Activated CD8-positive, alpha-beta T cell treated with anti-CD3 and anti-CD28 coated beads, Interleukin-2, amount 10 ng/mL, durations not matched to agents 7 days and 5 days (primary cell): ENCODE measurements at regions of chr16 and their contacts with region 1.

Region 1: DNA sequence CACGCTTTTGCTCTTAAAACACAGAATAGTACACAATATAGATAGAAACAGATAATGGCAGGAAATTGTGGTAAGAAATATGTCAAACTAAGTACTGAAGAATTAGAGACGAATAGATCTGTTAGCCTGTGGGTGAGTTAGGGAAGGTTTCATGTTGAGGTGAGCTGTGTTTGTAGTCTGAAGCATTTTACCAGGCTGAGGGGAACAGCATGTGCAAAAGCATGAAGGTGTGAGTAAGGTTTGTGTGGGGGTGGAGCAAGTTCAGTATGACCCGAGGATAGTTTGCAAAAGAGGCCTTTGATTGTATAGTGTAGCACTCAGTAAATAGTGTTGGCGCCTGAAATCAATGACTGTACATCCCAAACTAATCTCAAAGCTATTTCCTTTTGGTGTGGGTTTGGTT is 13.8 kb downstream of the IGSF6 start:
- DNase-seq: peak; percentile 28
- ATAC-seq: peak; percentile 73
- H3K4me3 Mint-ChIP-seq: no peak overlapping the region
- H3K27ac Mint-ChIP-seq: peak overlapping the region; percentile 82
- H3K4me1 Mint-ChIP-seq: peaks cover 25% of the 10 kb centered on the region
- H3K27me3 Mint-ChIP-seq: no peaks in the 10 kb centered on the region

Region 2: DNA sequence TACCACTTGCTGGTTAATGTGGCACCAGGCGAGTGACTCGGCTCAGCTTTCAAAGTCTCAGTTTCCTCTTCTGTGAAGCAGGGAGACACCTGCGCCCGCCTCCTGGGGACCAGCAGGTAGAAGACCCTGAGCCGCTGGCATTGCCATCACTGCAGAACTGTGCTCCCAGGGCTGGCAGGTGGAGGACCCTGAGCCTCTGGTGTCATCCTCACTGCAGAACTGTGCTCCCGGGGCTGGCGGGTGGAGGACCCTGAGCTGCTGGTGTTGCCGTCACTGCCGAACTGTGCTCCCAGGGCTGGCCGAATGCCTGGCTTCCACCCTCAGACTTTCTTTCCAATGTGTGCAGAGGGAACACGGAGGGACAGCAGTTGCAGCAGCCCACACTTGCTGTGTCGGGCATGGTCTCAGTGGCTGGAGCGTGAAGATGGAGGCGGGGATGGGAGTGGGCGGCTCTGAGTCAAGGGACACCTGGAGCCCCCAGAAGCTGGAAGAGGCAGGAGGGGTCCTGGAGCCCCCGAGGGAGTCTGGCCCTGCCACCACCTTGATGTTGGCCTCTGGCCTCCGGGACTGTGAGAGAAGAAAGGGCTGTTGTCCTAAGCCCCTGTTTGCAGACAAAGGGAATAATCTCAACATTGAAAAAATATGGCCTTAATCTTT is 115.0 kb before region 1 on chr16:
- CTCF ChIA-PET with region 1: no interaction called
- POLR2A ChIA-PET with region 1: no interaction called
- DNase-seq: no peak
- ATAC-seq: no peak
- H3K4me3 Mint-ChIP-seq: no peak overlapping the region
- H3K27ac Mint-ChIP-seq: no peak overlapping the region
- H3K4me1 Mint-ChIP-seq: no peaks in the 10 kb centered on the region
- H3K27me3 Mint-ChIP-seq: peaks cover 8% of the 10 kb centered on the region

Region 3: GRCh38 chr16:21584817-21585216 is 53.8 kb before region 1 on chr16:
- CTCF ChIA-PET with region 1: interaction called, 78 read pairs
- POLR2A ChIA-PET with region 1: no interaction called
- DNase-seq: no peak
- ATAC-seq: no peak
- H3K4me3 Mint-ChIP-seq: no peak overlapping the region
- H3K27ac Mint-ChIP-seq: no peak overlapping the region
- H3K4me1 Mint-ChIP-seq: peaks cover 3% of the 10 kb centered on the region
- H3K27me3 Mint-ChIP-seq: peaks cover 4% of the 10 kb centered on the region

Region 4: GRCh38 chr16:21608639-21609328 is 29.8 kb before region 1 on chr16:
- CTCF ChIA-PET with region 1: interaction called, 16 read pairs
- POLR2A ChIA-PET with region 1: interaction called, 3 read pairs
- DNase-seq: peak; percentile 75
- ATAC-seq: peak; percentile 82
- H3K4me3 Mint-ChIP-seq: peak overlapping the region; percentile 11
- H3K27ac Mint-ChIP-seq: peak overlapping the region; percentile 56
- H3K4me1 Mint-ChIP-seq: peaks cover 87% of the 10 kb centered on the region
- H3K27me3 Mint-ChIP-seq: no peaks in the 10 kb centered on the region

Region 5: DNA sequence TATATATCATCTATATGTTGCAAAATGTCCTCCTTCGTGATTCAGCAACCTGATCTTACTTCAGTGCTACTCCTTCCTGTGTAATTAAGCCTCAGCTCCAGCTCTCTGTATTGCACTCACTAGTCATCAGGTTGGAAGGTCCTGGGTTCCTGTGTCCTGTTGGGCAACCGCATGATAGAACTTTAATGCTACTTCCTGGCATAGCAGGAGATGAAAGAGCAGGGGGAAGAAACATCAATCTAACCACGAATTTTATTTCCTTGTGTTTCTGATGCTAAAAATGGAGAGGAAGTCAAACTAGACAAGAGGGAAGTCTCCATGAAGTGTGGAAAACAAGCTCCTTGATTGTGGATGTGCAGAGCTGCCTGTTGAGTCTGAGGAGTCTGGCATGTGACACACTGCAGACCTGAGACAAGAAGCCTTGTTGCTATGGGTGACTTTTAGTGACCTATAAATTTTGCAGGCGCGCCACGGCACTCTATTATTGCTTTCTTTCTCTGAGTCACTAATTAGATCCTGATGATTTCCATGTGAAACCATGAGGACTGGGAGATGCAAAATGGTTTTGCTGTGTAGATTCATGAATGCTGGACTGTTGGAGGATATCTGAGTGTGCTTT is 11.8 kb before region 1 on chr16:
- CTCF ChIA-PET with region 1: interaction called, 10 read pairs
- POLR2A ChIA-PET with region 1: no interaction called
- DNase-seq: peak; percentile 59
- ATAC-seq: peak; percentile 89
- H3K4me3 Mint-ChIP-seq: peak overlapping the region; percentile 8
- H3K27ac Mint-ChIP-seq: peak overlapping the region; percentile 71
- H3K4me1 Mint-ChIP-seq: peaks cover 55% of the 10 kb centered on the region
- H3K27me3 Mint-ChIP-seq: no peaks in the 10 kb centered on the region

Region 6: GRCh38 chr16:21685034-21685455 is 46.5 kb after region 1 on chr16:
- CTCF ChIA-PET with region 1: no interaction called
- POLR2A ChIA-PET with region 1: no interaction called
- DNase-seq: no peak
- ATAC-seq: no peak
- H3K4me3 Mint-ChIP-seq: no peak overlapping the region
- H3K27ac Mint-ChIP-seq: no peak overlapping the region
- H3K4me1 Mint-ChIP-seq: no peaks in the 10 kb centered on the region
- H3K27me3 Mint-ChIP-seq: peaks cover 4% of the 10 kb centered on the region